Esophagus muscularis mucosa (tissue), 4 donors: ENCODE measurements at regions of chr14 and their contacts with region 1.

Region 1: DNA sequence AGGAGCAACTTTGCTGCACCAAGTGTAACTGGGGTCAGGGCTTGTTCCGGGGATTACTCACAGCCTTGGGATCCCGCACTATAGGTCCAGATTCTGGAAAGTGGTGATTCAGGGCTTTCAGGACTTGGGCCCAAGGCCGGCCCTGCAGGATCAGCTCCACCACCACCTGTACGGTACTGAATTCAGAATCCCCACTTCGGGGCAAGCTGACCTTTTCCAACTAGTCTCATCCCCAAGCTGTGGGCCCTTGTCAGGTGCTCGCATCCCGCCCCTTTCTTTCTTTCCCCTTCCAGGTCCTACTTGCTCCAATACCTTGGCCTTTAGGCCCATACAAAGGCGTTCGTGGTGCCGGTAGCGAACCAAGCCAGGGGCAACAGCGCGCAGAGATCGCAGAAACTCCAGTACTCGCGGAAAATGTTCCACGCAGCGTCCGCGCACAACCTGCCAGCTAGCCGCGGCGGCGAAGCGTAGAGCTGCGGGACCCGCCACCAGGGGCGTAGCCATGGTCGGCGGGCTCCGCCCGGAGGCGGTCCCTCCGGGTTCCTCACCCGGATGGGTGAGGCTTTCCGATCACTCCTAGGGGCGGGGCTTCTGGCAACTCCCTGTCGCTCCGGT is 487 bp downstream of the TINF2 start:
- DNase-seq: peak; percentile 98
- H3K4me3 ChIP-seq: peak overlapping the region; percentile 65 to 83 (median 74)
- H3K27ac ChIP-seq: peak overlapping the region; percentile 94 to 99 (median 97)
- H3K4me1 ChIP-seq: peaks cover 44 to 61% (median 51%) of the 10 kb centered on the region in 4 donors
- H3K27me3 ChIP-seq: no peaks in the 10 kb centered on the region
- CTCF ChIP-seq: peak; percentile 57 to 71 (median 57)
- EP300 ChIP-seq: no peak
- POLR2A ChIP-seq: no peak

Region 2: DNA sequence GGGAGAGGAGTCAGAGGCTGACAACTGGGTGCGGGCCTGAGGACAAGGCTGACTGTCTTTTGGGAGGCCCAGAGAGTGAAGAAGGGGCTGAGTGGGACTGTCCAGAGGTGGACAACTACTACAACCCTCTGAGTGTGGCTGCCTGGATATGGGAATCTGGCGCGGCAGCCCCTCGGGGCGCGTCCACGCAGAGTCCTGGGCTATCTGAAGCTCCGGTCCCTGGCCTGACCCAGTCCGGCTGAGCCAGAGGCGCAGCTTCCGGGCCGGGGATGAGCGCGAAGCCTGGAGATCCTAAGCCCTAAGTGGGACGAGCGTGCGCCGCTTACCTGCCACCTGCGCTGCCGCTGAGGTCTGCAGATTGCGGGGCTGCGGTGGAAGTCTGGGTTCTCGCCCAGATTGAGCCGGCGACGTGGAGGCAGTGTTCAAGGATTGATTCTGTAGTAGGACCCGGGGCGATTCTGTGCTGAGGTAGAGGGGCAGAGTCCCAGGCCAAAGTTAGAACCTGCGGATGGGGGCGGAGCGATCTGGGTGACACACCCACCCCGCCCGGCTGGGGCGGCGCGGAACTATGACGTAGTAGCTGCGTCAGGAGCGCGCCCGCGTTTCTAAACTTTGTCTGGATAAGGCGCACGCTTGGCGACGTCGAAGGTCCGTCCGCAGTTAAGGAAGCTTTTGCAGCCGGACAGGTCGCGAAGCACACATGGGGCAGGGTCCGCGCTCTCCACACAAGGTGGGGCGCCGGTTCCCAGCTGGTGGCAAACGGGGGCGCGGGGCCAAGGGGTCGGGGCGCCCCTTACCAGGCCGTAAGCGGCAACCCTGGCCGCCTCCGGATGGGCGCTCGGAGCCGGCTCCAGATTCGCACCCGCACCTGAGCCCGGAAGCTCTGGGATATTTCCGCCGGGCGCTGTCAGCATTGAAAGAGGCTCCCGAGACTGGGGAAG is 57.6 kb after region 1 on chr14 and contains the starts of genes DHRS1 and NOP9:
- intact Hi-C with region 1: loop called (anchors 2 kb)
- DNase-seq: peak; percentile 98
- H3K4me3 ChIP-seq: peak within 1 kb of the TSS; percentile 73 to 91 (median 80)
- H3K27ac ChIP-seq: peak within 1 kb of the TSS; percentile 77 to 88 (median 84)
- H3K4me1 ChIP-seq: peaks cover 19 to 47% (median 34%) of the 10 kb centered on the region in 4 donors
- H3K27me3 ChIP-seq: no peaks in the 10 kb centered on the region
- CTCF ChIP-seq: peak in 1 of 3 experiments; percentile 26
- EP300 ChIP-seq: no peak
- POLR2A ChIP-seq: no peak
- total RNA-seq, gene DHRS1: 13.9 to 22.4 (median 19.2) TPM
- total RNA-seq, gene NOP9: 16.6 to 29.2 (median 21.6) TPM

Region 3: GRCh38 chr14:24442273-24443052 is 200.5 kb after region 1 on chr14 and contains the start of gene SDR39U1:
- intact Hi-C with region 1: loop called (anchors 5 kb)
- DNase-seq: peak; percentile 99
- H3K4me3 ChIP-seq: peak within 1 kb of the TSS; percentile 64 to 83 (median 70)
- H3K27ac ChIP-seq: peak within 1 kb of the TSS; percentile 90 to 100 (median 98)
- H3K4me1 ChIP-seq: peaks cover 39 to 46% (median 40%) of the 10 kb centered on the region in 4 donors
- H3K27me3 ChIP-seq: no peaks in the 10 kb centered on the region
- CTCF ChIP-seq: peak in 2 of 3 experiments; percentile 3 to 23
- EP300 ChIP-seq: no peak
- POLR2A ChIP-seq: peak; percentile 20
- total RNA-seq, gene SDR39U1: 23.9 to 48.6 (median 33.5) TPM